ENCODE measurements at regions of chr4 and their contacts with region 1.

Region 1: DNA sequence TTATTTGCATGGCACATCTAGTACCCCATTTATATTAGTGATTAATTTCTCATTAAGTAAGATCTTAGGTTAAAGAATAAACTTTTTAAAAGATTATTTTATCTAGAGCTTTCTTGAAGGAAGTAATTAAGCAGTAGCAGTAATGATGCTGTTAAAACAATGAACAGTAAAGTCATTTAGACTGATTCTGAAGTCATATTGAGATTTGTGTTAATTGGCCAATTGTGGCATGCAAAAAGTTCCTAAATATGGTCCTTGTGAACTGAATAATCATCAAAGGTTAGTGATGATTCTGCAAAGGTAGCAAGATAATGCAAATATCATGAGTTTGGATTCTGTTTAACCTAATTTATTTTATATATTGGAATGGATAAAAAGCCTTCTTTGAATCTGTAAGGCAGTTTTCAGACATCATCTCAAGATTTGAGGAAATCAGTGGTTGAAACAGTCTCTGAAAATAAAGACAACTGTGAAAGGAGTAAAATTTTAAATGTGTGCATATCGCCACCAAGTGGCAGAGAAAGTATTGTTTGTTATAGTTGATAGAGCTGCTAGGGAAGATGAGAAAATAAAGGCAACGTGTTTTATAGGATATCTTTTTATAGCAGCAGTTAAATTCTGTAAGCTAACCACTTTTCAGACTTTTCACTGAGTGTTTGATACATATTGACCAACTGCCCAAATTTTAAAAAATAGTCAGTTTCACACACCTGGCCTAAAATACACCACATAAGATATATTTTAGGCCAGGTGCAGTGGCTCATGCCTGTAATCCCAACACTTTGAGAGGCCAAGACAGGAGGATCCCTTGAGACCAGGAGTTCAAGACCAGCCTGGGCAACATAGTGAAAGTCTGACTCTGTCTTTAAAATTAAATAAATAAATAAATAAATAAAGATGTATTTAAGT is 79.6 kb downstream of the CCKAR start:
- DNase-seq: peak in 2 of 4 donors; percentile 29 to 59
- ATAC-seq: peak; percentile 45
- H3K4me3 ChIP-seq: no peak overlapping the region
- H3K27ac ChIP-seq: no peak overlapping the region
- H3K4me1 ChIP-seq: peaks cover 22% of the 10 kb centered on the region
- H3K27me3 ChIP-seq: no peaks in the 10 kb centered on the region
- CTCF ChIP-seq: peak; percentile 12 to 76 (median 71)
- POLR2A ChIP-seq: no peak

Region 2: GRCh38 chr4:25993395-25994185 is 417.0 kb before region 1 on chr4:
- intact Hi-C with region 1: loop called (anchors 10 kb)
- DNase-seq: no peak
- ATAC-seq: no peak
- H3K4me3 ChIP-seq: no peak overlapping the region
- H3K27ac ChIP-seq: no peak overlapping the region
- H3K4me1 ChIP-seq: no peaks in the 10 kb centered on the region
- H3K27me3 ChIP-seq: no peaks in the 10 kb centered on the region
- CTCF ChIP-seq: peak in 1 of 7 experiments; percentile 2
- POLR2A ChIP-seq: no peak

Measured in body of pancreas (tissue), 4 donors.